Mucosa of descending colon (tissue), 3 donors: ENCODE measurements at regions of chr2 and their contacts with region 1.

Region 1: DNA sequence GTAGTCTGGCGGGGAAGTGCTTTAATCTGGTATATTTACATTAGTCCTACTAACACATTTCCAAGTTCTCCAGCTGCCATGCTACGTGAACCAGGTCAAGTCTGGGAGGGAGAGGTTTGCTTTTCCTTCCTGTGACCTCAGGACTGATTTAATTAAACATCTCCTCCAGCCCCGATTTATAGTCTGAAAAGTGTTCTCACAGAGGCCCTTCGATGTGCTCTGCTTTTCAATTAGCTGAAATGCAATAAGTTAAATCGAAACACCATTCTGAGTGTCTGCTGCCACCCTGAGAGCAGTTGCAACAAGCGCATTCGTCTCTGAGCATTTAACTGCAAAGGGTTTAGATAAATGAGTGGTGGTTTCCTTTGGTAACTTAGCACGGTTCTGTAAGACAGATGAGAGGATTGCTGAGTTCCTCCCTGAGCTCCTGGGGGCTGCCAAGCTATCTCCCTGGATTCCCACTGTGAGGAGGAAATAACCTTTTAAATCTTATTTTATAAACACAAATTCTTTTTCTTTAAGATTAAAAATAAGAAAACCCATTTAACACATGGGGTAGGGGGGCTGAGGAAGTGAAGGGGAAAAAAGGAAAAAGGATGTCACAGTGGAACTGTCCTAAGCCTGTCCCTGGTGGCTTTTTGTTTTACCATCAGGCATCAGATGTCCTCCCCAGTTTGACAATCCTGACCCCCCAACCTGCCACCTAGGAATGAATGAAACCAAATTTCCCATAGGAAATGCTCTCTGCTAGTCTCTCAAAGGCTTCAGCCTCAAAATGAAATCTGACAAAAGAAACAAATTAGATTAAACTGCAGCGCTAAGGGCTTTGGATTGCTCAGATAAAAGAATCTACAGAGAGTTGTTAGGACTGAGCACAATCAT is 56.5 kb upstream of the CREB1 start:
- DNase-seq: peak in 1 of 3 donors; percentile 38
- ATAC-seq: peak; percentile 46
- H3K4me3 ChIP-seq: no peak overlapping the region
- H3K4me1 ChIP-seq: no peaks in the 10 kb centered on the region
- CTCF ChIP-seq: no peak

Region 2: GRCh38 chr2:206798000-206798399 is 675.3 kb before region 1 on chr2:
- intact Hi-C with region 1: loop called in 1 of 2 experiments (anchors 10 kb)
- DNase-seq: no peak
- ATAC-seq: no peak
- H3K4me3 ChIP-seq: no peak overlapping the region
- H3K4me1 ChIP-seq: no peaks in the 10 kb centered on the region
- CTCF ChIP-seq: no peak

Region 3: GRCh38 chr2:206981739-206982340 is 491.4 kb before region 1 on chr2:
- intact Hi-C with region 1: loop called (anchors 5 kb)
- DNase-seq: peak; percentile 49 to 64 (median 53)
- ATAC-seq: peak; percentile 60
- H3K4me3 ChIP-seq: no peak overlapping the region
- H3K4me1 ChIP-seq: no peaks in the 10 kb centered on the region
- CTCF ChIP-seq: no peak

Region 4: GRCh38 chr2:206989306-206989705 is 484.0 kb before region 1 on chr2:
- intact Hi-C with region 1: loop called (anchors 5 kb)
- DNase-seq: peak in 2 of 3 donors; percentile 17 to 40
- ATAC-seq: peak; percentile 70
- H3K4me3 ChIP-seq: no peak overlapping the region
- H3K4me1 ChIP-seq: no peaks in the 10 kb centered on the region
- CTCF ChIP-seq: peak; percentile 33